Breast epithelium (tissue), 4 donors: ENCODE measurements at regions of chr6 and their contacts with region 1.

Region 1: GRCh38 chr6:119881416-119881815 is 531.9 kb upstream of the MAN1A1 start:
- DNase-seq: no peak
- H3K4me3 ChIP-seq: no peak overlapping the region
- H3K27ac ChIP-seq: no peak overlapping the region
- H3K4me1 ChIP-seq: no peaks in the 10 kb centered on the region
- H3K27me3 ChIP-seq: no peaks in the 10 kb centered on the region
- CTCF ChIP-seq: no peak
- POLR2A ChIP-seq: no peak

Region 2: DNA sequence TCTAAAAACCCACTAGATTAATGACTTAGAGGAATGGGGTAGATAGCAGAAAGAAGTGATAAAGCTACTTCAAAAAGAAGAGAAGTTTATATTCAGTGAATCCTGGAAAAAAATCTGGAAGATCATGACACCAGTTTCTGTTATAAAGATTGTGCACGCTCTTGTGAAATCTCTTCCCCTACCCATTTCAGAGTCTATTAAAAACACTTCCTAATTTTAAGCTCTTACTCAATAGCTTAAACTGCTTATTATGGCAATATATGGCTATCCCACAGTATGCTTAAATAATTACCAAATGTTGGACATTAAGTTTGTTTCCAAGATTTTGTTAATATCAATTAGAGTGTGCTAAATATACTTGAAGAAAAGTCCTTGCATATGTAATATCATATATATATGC is 53.4 kb after region 1 on chr6:
- intact Hi-C with region 1: loop called (anchors 2 kb)
- DNase-seq: no peak
- H3K4me3 ChIP-seq: no peak overlapping the region
- H3K27ac ChIP-seq: no peak overlapping the region
- H3K4me1 ChIP-seq: no peaks in the 10 kb centered on the region
- H3K27me3 ChIP-seq: no peaks in the 10 kb centered on the region
- CTCF ChIP-seq: no peak
- POLR2A ChIP-seq: no peak